Aorta (tissue), 5 donors: ENCODE measurements at regions of chr17 and their contacts with region 1.

Region 1: DNA sequence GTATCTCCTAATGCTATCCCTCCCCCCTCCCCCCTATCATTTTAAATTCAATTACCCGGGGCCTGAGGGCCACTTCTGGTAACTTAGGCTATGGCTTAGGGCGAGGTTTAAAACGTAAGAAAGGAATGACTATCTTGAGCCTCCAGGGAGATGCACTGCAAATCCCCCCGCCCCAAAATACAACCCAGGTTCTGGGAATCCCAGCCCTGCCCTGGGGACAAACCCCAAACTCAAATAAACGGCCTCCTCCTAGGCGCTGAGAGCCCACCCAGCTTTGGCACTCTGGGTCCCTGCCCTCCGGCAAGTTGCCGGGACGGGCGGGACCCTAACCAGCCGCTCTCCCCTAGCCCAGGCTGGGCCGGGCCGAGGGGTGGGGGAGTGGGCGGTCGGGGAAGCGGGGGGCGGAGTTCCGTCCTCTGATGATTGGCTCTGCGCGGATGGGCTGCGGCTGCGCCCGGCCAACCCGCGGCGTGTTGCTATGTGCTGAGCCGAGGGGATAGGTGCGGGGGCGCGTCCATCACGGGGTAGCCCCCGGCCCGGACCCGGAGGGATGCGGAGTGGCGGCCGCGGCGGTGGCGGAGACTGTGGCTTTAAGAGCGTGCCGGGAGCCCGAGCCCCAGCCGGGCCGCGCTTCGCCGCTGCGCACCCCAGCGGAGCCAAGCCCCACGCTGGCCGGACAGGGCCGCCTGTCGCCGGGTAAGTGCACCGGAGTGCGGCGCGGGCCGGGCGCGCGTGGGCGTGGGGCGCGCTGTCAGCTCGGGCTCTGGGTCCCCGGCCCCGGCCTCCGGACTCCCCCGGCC is at the start of gene YPEL2:
- DNase-seq: peak; percentile 98 to 99
- ATAC-seq: peak; percentile 94
- H3K4me3 ChIP-seq: peak within 1 kb of the TSS; percentile 81 to 97
- H3K27ac ChIP-seq: peak within 1 kb of the TSS; percentile 96 to 100
- H3K4me1 ChIP-seq: peaks cover 10 to 15% of the 10 kb centered on the region in 2 donors
- H3K27me3 ChIP-seq: no peaks in the 10 kb centered on the region
- total RNA-seq, gene YPEL2: 38.5 to 54.0 TPM

Region 2: DNA sequence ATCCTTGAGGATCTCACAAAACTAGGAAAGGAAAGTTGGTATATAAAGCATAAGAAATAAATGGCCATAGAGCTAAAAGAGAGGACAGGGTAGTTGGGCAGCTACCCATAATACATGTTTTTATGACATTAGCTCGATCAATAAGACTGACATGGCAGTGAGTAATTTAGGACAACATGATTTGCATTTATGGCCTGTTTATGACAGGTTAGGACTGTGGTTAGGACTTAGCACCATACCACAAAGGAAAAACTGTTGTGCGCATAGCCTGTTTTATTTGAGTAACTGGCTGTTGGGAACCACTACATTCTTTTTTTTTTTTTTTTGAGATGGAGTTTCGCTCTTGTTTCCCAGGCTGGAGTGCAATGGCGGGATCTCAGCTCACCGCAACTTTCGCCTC is 206.7 kb before region 1 on chr17:
- intact Hi-C with region 1: no loop called
- DNase-seq: no peak
- ATAC-seq: no peak
- H3K4me3 ChIP-seq: no peak overlapping the region
- H3K27ac ChIP-seq: no peak overlapping the region
- H3K4me1 ChIP-seq: no peaks in the 10 kb centered on the region
- H3K27me3 ChIP-seq: no peaks in the 10 kb centered on the region

Region 3: GRCh38 chr17:59366773-59367657 is 35.7 kb after region 1 on chr17:
- intact Hi-C with region 1: loop called (anchors 5 kb)
- DNase-seq: no peak
- ATAC-seq: peak; percentile 72
- H3K4me3 ChIP-seq: no peak overlapping the region
- H3K27ac ChIP-seq: peak overlapping the region; percentile 94 to 95
- H3K4me1 ChIP-seq: peaks cover 13 to 51% of the 10 kb centered on the region in 2 donors
- H3K27me3 ChIP-seq: no peaks in the 10 kb centered on the region